ENCODE measurements at regions of chr7 and their contacts with region 1.

Region 1: GRCh38 chr7:47807756-47808155 is 140.5 kb downstream of the PKD1L1 start:
- DNase-seq: no peak
- H3K4me3 ChIP-seq: no peak overlapping the region
- H3K27ac ChIP-seq: no peak overlapping the region
- H3K4me1 ChIP-seq: peaks cover 0 to 27% of the 10 kb centered on the region in 2 experiments; a peak in 1 of 4 replicates
- H3K27me3 ChIP-seq: no peaks in the 10 kb centered on the region
- CTCF ChIP-seq: no peak
- EP300 ChIP-seq: no peak
- RAD21 ChIP-seq: no peak

Region 2: GRCh38 chr7:47795631-47796030 is 12.1 kb before region 1 on chr7:
- CTCF ChIA-PET with region 1: interaction called, 10 read pairs
- POLR2A ChIA-PET with region 1: no interaction called
- DNase-seq: no peak
- H3K4me3 ChIP-seq: peak overlapping the region; percentile 3 to 4; a peak in 3 of 4 replicates
- H3K27ac ChIP-seq: peak overlapping the region; percentile 64 to 81
- H3K4me1 ChIP-seq: peaks cover 0 to 3% of the 10 kb centered on the region in 2 experiments; a peak in 3 of 4 replicates
- H3K27me3 ChIP-seq: no peaks in the 10 kb centered on the region
- CTCF ChIP-seq: no peak
- EP300 ChIP-seq: peak; percentile 56 to 85; a peak in 3 of 4 replicates
- RAD21 ChIP-seq: no peak

Region 3: GRCh38 chr7:47827351-47827756 is 19.6 kb after region 1 on chr7:
- CTCF ChIA-PET with region 1: no interaction called
- POLR2A ChIA-PET with region 1: no interaction called
- DNase-seq: no peak
- H3K4me3 ChIP-seq: no peak overlapping the region
- H3K27ac ChIP-seq: no peak overlapping the region
- H3K4me1 ChIP-seq: peaks cover 0 to 3% of the 10 kb centered on the region in 2 experiments; a peak in 1 of 4 replicates
- H3K27me3 ChIP-seq: no peaks in the 10 kb centered on the region
- CTCF ChIP-seq: no peak
- EP300 ChIP-seq: no peak
- RAD21 ChIP-seq: no peak

Measured in SK-N-SH (cell line).